ENCODE measurements at regions of chr12 and their contacts with region 1.

Region 1: GRCh38 chr12:44551631-44552030 is 324.5 kb downstream of the NELL2 start:
- DNase-seq: no peak
- ATAC-seq: no peak
- H3K4me3 ChIP-seq: no peak overlapping the region
- H3K27ac ChIP-seq: no peak overlapping the region
- H3K4me1 ChIP-seq: no peaks in the 10 kb centered on the region
- H3K27me3 ChIP-seq: no peaks in the 10 kb centered on the region
- CTCF ChIP-seq: no peak
- EP300 ChIP-seq: no peak
- POLR2A ChIP-seq: no peak
- RAD21 ChIP-seq: no peak

Region 2: GRCh38 chr12:44334326-44334725 is 217.3 kb before region 1 on chr12:
- CTCF ChIA-PET with region 1: no interaction called
- POLR2A ChIA-PET with region 1: no interaction called
- in situ Hi-C with region 1: no loop called
- intact Hi-C with region 1: no loop called
- DNase-seq: no peak
- ATAC-seq: no peak
- H3K4me3 ChIP-seq: no peak overlapping the region
- H3K27ac ChIP-seq: no peak overlapping the region
- H3K4me1 ChIP-seq: no peaks in the 10 kb centered on the region
- H3K27me3 ChIP-seq: no peaks in the 10 kb centered on the region
- CTCF ChIP-seq: no peak
- EP300 ChIP-seq: no peak
- POLR2A ChIP-seq: no peak
- RAD21 ChIP-seq: no peak

Region 3: DNA sequence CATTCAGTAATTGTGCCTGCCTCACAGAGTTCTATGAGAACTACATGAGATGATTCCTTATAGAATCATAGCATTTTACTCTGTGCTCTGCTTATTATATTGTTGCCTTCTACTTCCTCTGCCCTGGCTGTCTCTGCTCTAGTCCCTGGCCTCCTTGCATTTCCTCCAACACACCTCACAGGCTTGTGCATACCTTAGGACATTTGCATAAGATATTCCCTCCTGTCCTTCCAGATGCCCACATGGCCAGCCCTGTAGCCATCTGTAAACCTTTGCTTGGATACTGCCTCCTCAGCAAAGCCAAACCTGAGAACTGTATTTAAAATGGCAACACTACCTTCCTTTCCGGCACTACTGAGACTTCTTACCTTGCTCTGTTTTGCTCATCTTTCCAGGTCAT is 129.1 kb before region 1 on chr12:
- CTCF ChIA-PET with region 1: no interaction called
- POLR2A ChIA-PET with region 1: no interaction called
- in situ Hi-C with region 1: no loop called
- intact Hi-C with region 1: no loop called
- DNase-seq: no peak
- ATAC-seq: no peak
- H3K4me3 ChIP-seq: no peak overlapping the region
- H3K27ac ChIP-seq: no peak overlapping the region
- H3K4me1 ChIP-seq: peaks cover 9% of the 10 kb centered on the region
- H3K27me3 ChIP-seq: no peaks in the 10 kb centered on the region
- CTCF ChIP-seq: no peak
- EP300 ChIP-seq: no peak
- POLR2A ChIP-seq: no peak
- RAD21 ChIP-seq: no peak

Region 4: GRCh38 chr12:44459569-44459968 is 92.1 kb before region 1 on chr12:
- CTCF ChIA-PET with region 1: no interaction called
- POLR2A ChIA-PET with region 1: no interaction called
- in situ Hi-C with region 1: no loop called
- intact Hi-C with region 1: no loop called
- DNase-seq: no peak
- ATAC-seq: no peak
- H3K4me3 ChIP-seq: no peak overlapping the region
- H3K27ac ChIP-seq: no peak overlapping the region
- H3K4me1 ChIP-seq: no peaks in the 10 kb centered on the region
- H3K27me3 ChIP-seq: no peaks in the 10 kb centered on the region; a peak in 2 of 5 replicates
- CTCF ChIP-seq: no peak
- EP300 ChIP-seq: no peak
- POLR2A ChIP-seq: no peak
- RAD21 ChIP-seq: no peak

Region 5: GRCh38 chr12:44526655-44527182 is 24.9 kb before region 1 on chr12:
- CTCF ChIA-PET with region 1: no interaction called
- POLR2A ChIA-PET with region 1: no interaction called
- in situ Hi-C with region 1: no loop called
- intact Hi-C with region 1: loop called (anchors 1 kb)
- DNase-seq: no peak
- ATAC-seq: peak; percentile 70
- H3K4me3 ChIP-seq: no peak overlapping the region
- H3K27ac ChIP-seq: no peak overlapping the region
- H3K4me1 ChIP-seq: peaks cover 15% of the 10 kb centered on the region
- H3K27me3 ChIP-seq: no peaks in the 10 kb centered on the region
- CTCF ChIP-seq: no peak
- EP300 ChIP-seq: no peak
- POLR2A ChIP-seq: no peak
- RAD21 ChIP-seq: no peak

Region 6: DNA sequence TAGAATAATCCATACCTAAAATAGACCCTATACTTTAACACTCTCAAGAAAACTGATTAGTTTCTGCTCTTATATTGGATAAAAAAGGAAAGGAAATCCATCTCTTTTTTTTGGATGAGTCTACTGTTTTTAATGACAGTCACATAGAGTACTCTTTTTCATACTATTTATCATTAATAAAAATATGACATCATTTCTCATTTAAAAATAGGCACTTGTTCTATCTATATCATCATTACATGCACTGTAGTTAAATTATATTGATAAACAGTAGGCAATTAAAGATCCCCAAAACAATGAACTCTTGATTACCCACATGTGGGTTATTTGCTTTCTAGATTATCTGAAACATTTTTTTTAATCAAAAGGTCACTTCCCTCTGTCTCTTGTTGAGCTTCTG is 14.3 kb before region 1 on chr12:
- CTCF ChIA-PET with region 1: no interaction called
- POLR2A ChIA-PET with region 1: no interaction called
- in situ Hi-C with region 1: no loop called
- intact Hi-C with region 1: no loop called
- DNase-seq: no peak
- ATAC-seq: no peak
- H3K4me3 ChIP-seq: no peak overlapping the region
- H3K27ac ChIP-seq: no peak overlapping the region
- H3K4me1 ChIP-seq: no peaks in the 10 kb centered on the region
- H3K27me3 ChIP-seq: no peaks in the 10 kb centered on the region; a peak in 1 of 5 replicates
- CTCF ChIP-seq: no peak
- EP300 ChIP-seq: no peak
- POLR2A ChIP-seq: no peak
- RAD21 ChIP-seq: no peak